HEK293 (cell line): ENCODE measurements at regions of chr21 and their contacts with region 1.

Region 1: DNA sequence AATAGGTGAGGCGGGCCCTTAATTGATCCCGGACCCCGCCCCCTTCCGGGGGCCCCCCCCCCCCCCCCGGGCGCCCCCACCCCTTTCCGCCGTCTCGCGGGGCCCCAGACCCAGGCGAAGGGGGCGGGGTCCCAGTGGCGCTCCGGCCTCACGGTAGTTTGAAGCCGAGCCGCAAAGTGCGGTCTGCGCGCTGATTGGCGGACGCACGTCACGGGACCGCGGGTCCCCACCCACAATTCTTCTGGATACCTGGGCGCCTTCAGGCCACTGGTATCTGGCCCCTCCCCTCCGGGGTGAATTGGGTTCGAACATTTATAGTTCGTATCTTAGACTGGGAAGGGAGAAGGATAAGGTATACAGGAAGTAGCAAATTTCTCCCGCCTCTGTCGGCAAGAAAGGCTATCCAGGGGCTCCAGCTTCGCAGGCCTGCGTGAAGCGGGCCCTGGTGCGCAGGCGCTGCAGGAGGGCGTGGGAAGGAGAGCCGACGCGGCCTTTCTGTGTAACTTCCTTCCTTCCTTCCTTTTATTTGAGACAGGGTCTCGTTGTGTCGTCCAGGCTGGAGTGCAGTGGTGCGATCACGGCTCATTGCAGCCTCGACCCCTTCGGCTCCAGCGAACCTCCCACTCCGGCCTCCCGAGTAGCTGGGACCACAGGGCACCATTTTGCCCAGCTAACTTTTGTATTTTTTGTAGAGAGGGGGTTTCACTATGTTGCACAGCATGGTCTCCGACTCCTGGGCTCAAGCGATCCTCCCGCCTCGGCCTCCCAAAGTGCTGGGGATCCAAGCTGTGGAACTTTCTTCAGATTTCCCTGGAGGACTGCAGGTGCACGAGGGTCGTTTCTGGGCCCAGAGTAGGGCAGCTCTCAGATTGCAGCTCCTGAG is 564 bp upstream of the HMGN1 start:
- H3K4me3 ChIP-seq: peak overlapping the region; percentile 61
- H3K27ac ChIP-seq: peak overlapping the region; percentile 86
- H3K4me1 ChIP-seq: 0 out of 2 replicates have a peak, but pooled peaks cover 3% of the 10 kb centered on the region
- CTCF ChIP-seq: no peak

Region 2: DNA sequence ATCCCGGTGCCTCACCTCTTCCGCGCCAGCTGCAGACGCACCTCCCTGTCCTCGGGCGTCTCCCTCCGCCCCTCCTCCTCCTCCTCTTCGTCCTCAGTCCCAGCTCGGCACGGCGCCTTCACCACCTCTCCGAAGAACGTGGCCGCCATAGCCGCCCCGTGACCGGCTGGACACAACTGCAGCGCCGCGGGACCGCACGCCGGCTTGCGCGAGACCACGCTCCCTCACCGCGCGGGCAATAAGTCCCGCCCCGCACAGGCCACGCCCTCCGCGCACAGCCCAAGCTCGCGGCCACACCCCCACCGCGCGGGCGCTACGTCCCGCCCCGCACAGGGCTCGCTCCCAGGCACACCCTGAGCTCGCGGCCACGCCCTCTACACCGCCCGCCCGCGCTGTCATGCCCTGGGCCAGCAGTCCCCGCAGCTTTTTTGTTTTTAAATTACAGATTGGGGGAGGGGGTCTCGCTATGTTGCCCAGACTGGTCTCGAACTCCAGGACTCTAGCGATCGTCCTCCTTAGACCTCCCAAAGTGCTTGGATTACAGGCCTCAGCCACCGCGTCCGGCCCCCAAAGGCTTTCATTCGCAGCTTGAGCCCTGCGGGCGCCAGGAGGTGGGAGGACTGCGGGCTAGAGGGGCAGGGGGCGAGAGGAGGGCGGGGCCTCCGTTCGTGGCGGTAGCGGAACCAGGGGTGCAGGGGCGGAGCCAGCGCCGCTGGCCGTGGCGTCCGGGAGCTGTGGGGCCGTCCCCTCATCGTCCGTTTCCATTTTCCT is 166.0 kb before region 1 on chr21 and contains the start of gene PSMG1:
- CTCF ChIA-PET with region 1: no interaction called
- POLR2A ChIA-PET with region 1: interaction called, 19 read pairs
- H3K4me3 ChIP-seq: peak within 1 kb of the TSS; percentile 89
- H3K27ac ChIP-seq: peak within 1 kb of the TSS; percentile 86
- H3K4me1 ChIP-seq: 0 out of 2 replicates have a peak, but pooled peaks cover 3% of the 10 kb centered on the region
- CTCF ChIP-seq: peak; percentile 66

Region 3: DNA sequence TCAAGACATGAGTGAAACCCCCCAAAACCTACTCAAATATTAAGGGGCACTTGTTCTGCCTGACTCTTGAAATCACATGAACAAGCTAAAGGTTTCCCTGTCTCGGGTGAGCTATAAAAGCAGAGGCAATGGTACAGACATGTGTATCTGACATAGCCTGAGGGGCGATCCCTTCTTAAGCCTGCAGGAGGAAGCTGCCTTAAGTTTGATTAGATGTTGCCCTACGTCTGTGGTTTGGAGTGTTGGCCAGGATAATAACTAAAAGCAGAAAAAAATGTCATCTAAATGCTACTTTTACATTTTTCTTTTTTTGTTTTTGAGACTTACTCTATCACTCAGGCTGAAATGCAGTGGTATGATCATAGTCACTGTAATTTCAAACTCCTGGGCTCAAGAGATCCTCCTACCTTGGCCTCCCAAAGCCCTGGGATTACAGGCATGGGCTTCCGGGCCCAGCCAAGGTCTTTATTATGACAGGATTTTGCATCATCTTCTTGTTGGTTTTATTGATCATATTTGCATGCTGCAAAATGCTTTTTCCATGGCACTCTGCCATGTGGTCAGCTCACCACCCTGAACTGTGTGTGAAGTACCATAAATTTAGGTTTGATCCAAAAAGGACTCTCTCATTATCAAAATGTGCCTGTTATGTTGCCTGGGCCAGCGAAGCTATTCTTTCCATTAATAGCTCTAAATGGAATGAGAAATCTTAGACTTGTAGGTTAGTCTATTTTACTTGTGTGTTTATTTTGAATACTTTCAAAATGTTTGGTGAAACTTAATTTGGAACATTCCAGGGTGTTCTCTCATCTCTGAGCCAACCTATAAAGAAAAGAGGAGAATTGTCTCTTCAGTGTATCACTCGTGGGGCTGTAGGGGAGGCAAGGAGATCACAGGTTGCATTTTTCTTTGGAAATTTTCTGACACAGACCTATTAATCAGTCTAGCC is 14.4 kb after region 1 on chr21:
- CTCF ChIA-PET with region 1: no interaction called
- POLR2A ChIA-PET with region 1: interaction called, 13 read pairs
- H3K4me3 ChIP-seq: no peak overlapping the region
- H3K27ac ChIP-seq: no peak overlapping the region
- H3K4me1 ChIP-seq: no peaks in the 10 kb centered on the region
- CTCF ChIP-seq: no peak

Region 4: DNA sequence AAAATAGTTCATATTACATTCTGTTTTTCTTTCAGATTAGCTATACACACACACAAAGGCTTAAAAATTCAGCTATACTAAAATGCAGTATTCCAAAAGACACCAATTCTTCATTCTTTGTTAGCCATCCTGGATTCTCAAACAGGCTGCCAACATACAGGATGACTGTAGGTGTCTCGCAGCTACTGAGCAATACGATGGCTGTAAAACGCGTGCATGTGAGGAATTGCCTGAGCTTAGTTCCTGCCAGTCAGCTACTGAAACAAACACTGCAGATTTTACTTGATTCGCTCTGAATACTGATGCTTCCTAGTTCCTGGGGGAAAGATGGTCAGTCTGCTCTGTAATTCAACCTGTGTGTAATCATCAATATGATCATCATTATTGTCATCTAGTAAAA is 24.2 kb after region 1 on chr21:
- CTCF ChIA-PET with region 1: no interaction called
- POLR2A ChIA-PET with region 1: interaction called, 12 read pairs
- H3K4me3 ChIP-seq: no peak overlapping the region
- H3K27ac ChIP-seq: no peak overlapping the region
- H3K4me1 ChIP-seq: no peaks in the 10 kb centered on the region
- CTCF ChIP-seq: peak; percentile 27; the same call in 1 of the 2 replicates

Region 5: GRCh38 chr21:39379986-39380891 is 30.8 kb after region 1 on chr21:
- CTCF ChIA-PET with region 1: interaction called, 3 read pairs
- POLR2A ChIA-PET with region 1: interaction called, 29 read pairs
- H3K4me3 ChIP-seq: peak overlapping the region; percentile 72
- H3K27ac ChIP-seq: peak overlapping the region; percentile 53
- H3K4me1 ChIP-seq: peaks cover 2% of the 10 kb centered on the region; the same call in 1 of the 2 replicates
- CTCF ChIP-seq: no peak